H1 (cell line): ENCODE measurements at regions of chr12 and their contacts with region 1.

Region 1: GRCh38 chr12:54214553-54215406 is 26.0 kb upstream of the SMUG1 start:
- DNase-seq: peak; percentile 78 to 96
- H3K4me3 ChIP-seq: no peak overlapping the region
- H3K27ac ChIP-seq: no peak overlapping the region
- H3K4me1 ChIP-seq: peaks cover 0 to 26% (median 17%) of the 10 kb centered on the region in 4 experiments; a peak in 6 of 7 replicates
- H3K27me3 ChIP-seq: peaks cover 1 to 42% (median 27%) of the 10 kb centered on the region in 4 experiments; a peak in 6 of 7 replicates
- CTCF ChIP-seq: peak; percentile 98 to 100 (median 100)
- EP300 ChIP-seq: no peak
- POLR2A ChIP-seq: no peak
- RAD21 ChIP-seq: peak; percentile 54 to 68

Region 2: DNA sequence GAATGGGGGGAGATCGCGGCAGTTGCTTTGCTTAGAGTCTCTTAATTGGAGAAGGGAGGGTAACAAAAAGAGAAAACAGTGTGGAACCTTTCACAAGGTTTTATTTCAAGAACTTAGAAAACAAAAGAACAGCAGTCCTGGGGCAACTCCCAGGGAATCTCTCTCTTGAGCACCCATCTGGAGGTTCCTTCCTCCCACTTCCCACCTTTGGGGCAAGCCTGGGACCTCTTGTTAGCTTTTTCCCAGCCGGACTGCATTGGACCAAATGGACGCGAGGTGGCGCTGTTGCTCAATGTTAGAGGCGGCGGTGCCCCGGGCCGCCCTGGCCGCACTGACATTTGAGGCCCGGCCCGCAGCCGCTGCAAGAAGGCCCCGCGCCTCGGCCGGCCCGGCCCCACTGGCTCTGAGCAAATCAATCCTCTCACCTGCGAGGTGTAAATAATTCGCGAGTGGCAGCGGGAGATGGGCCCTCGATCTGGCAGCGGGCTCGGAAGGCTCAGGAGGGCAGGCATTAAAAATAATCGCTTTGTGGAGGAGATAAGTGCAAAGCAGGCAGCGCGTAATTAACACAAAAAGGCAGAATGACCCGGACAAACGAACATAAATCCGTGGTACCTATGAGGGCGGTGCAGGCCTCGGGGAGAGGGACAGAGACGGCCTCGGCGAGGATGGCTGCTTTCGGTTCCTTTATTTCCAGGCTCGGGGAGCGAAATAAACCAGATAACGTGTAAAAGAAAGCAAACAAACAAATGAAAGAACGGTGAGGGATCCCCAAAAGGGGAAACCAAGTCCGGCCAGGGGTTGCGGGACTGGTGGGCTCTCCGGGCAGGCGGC is 208.7 kb before region 1 on chr12:
- CTCF ChIA-PET with region 1: interaction called, 154 read pairs
- POLR2A ChIA-PET with region 1: no interaction called
- DNase-seq: peak; percentile 50 to 98
- H3K4me3 ChIP-seq: no peak overlapping the region
- H3K27ac ChIP-seq: no peak overlapping the region
- H3K4me1 ChIP-seq: peaks cover 0 to 4% (median 0%) of the 10 kb centered on the region in 4 experiments; a peak in 2 of 7 replicates
- H3K27me3 ChIP-seq: peaks cover 97 to 100% (median 100%) of the 10 kb centered on the region in 4 experiments
- CTCF ChIP-seq: peak; percentile 88 to 97 (median 89)
- EP300 ChIP-seq: no peak
- POLR2A ChIP-seq: no peak
- RAD21 ChIP-seq: peak; percentile 98

Region 3: DNA sequence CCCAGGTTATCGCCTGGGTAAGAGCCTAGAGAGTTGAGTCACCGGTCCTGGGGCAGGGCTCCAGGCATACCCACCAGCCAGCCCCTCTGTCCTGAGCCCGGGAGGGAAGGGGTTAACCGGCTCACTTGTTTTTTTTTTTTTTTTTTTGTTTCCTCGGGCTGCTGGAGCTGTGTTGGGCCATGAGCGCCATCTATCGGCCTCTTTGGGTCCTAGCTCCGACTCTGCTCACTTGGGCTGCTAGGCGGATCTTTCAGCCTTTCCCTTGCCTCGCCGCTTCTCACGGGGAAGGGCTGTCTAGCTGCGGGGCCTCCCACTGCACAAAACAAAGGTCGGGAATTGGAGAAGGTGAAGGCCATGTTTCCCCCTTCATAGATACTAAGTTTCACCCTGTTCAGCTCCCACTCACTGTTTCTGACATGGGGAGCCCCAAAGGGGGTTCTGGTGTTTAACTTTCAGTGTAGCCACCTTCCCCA is 23.2 kb before region 1 on chr12:
- CTCF ChIA-PET with region 1: interaction called, 178 read pairs
- POLR2A ChIA-PET with region 1: no interaction called
- DNase-seq: peak; percentile 62 to 85
- H3K4me3 ChIP-seq: no peak overlapping the region
- H3K27ac ChIP-seq: no peak overlapping the region
- H3K4me1 ChIP-seq: no peaks in the 10 kb centered on the region; a peak in 2 of 7 replicates
- H3K27me3 ChIP-seq: peaks cover 6 to 50% (median 30%) of the 10 kb centered on the region in 4 experiments
- CTCF ChIP-seq: peak; percentile 73 to 93 (median 86)
- EP300 ChIP-seq: no peak
- POLR2A ChIP-seq: no peak
- RAD21 ChIP-seq: peak; percentile 92 to 96

Region 4: DNA sequence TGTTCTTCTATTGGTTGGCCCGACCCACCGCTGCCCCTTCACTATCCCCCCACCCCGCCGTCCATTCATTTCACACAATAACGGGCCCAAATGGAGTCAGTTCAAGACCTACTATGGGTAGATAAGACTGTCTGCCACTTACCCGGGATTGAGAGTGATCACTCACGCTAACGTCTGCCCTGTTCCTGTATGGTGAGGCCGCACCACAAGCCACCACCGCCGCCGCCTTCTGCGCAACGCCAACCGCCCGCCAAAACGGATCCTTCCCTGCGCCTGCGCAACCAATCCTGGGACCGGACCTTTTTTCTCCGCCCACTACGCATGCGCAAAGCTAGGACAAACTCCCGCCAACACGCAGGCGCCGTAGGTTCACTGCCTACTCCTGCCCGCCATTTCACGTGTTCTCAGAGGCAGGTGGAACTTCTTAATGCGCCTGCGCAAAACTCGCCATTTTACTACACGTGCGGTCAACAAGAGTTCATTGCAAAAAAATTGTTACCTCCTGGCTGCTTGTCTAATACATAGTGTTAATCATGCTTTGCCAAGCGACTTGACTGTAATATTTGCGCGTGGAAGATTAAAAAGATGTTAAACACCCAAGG is 65.2 kb after region 1 on chr12 and contains the start of gene CBX5:
- CTCF ChIA-PET with region 1: no interaction called
- POLR2A ChIA-PET with region 1: interaction called, 52 read pairs
- DNase-seq: peak; percentile 96 to 98
- H3K4me3 ChIP-seq: peak within 1 kb of the TSS; percentile 83 to 99 (median 96)
- H3K27ac ChIP-seq: peak within 1 kb of the TSS; percentile 99
- H3K4me1 ChIP-seq: peaks cover 0 to 12% (median 8%) of the 10 kb centered on the region in 4 experiments; a peak in 5 of 7 replicates
- H3K27me3 ChIP-seq: no peaks in the 10 kb centered on the region
- CTCF ChIP-seq: no peak
- EP300 ChIP-seq: 0 out of 3 replicates have a peak, but pooled peaks of 1 of the 2 experiments have one; percentile 26
- POLR2A ChIP-seq: peak; percentile 50 to 67; a peak in 2 of 3 replicates
- RAD21 ChIP-seq: no peak; a peak in 1 of 4 replicates
- total RNA-seq, gene CBX5: 217 and 231 TPM in 2 replicates

Region 5: DNA sequence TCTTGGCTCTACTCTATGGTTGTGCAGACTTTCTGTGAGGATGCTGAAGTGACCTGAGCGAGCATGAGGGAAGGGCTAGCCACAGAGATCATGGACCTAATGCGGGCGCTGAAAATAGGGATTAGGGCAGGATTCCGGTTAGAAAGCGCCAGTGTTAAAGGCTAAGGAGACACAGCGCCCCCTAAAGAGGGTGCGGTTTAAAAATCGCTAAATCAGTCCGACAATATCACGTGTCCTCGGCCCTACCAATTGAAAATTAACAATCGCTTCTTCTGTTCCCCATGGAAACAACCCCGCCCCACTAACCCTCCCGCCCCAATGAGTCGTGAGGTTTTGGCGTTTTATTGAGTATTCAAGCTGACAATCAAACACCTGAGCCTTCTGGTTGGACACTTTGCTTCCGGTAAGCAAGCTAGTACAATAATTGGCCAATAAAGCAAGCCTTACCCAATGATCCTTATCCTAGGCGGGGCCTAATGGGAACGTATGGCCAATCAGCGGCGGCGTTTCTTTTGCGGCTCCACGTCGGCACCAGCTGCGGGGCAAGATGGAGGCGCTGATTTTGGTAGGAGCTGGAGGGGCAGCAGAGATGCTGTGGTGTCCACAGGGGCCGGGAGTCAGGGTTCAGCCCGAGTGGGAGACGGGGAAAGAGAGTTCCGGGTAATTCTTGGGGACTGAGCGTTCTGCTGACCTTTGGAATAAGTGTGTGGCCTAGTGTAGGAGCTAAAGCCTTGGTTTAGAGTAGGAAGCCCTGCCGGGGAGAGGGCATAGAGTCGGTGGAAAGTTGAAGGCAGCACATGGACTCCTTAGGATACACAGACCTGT is 110.0 kb after region 1 on chr12 and contains the start of gene COPZ1:
- CTCF ChIA-PET with region 1: interaction called, 13 read pairs
- POLR2A ChIA-PET with region 1: no interaction called
- DNase-seq: peak; percentile 87 to 97
- H3K4me3 ChIP-seq: peak within 1 kb of the TSS; percentile 79 to 97 (median 88)
- H3K27ac ChIP-seq: peak within 1 kb of the TSS; percentile 83
- H3K4me1 ChIP-seq: peaks cover 0 to 10% (median 4%) of the 10 kb centered on the region in 4 experiments; a peak in 2 of 7 replicates
- H3K27me3 ChIP-seq: no peaks in the 10 kb centered on the region
- CTCF ChIP-seq: peak; percentile 57 to 89 (median 81)
- EP300 ChIP-seq: no peak
- POLR2A ChIP-seq: peak; percentile 54 to 87
- RAD21 ChIP-seq: peak; percentile 80 to 82
- total RNA-seq, gene COPZ1: 94.2 and 103 TPM in 2 replicates

Region 6: GRCh38 chr12:54359033-54359761 is 144.4 kb after region 1 on chr12:
- CTCF ChIA-PET with region 1: interaction called, 21 read pairs
- POLR2A ChIA-PET with region 1: interaction called, 8 read pairs
- DNase-seq: peak; percentile 89 to 98
- H3K4me3 ChIP-seq: peak overlapping the region; percentile 57 to 78 (median 74)
- H3K27ac ChIP-seq: peak overlapping the region; percentile 35; the same call in 1 of the 2 replicates
- H3K4me1 ChIP-seq: peaks cover 16 to 38% (median 20%) of the 10 kb centered on the region in 4 experiments
- H3K27me3 ChIP-seq: no peaks in the 10 kb centered on the region; a peak in 1 of 7 replicates
- CTCF ChIP-seq: no peak
- EP300 ChIP-seq: no peak; a peak in 1 of 3 replicates
- POLR2A ChIP-seq: 0 out of 3 replicates have a peak, but pooled peaks of 1 of the 2 experiments have one; percentile 8
- RAD21 ChIP-seq: no peak

Region 7: DNA sequence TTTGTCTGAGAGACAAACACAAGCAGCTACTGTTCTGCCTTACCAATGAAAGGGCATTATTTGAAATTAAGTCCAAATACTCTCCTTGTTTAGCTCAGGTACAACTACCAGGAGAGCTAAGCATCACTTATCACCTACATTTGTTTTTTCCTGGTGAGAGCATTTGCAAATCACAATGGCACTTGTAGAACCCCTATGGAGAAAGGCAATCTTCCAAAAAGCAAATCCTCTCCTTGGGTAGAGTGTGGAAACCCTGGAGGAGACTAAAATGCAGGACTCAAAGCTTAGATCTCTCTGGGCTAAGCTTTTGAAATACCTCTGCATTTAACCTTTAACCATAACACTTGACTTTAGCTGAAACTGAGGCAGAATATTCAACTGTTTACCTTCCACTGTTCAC is 237.8 kb after region 1 on chr12:
- CTCF ChIA-PET with region 1: no interaction called
- POLR2A ChIA-PET with region 1: no interaction called
- DNase-seq: no peak
- H3K4me3 ChIP-seq: no peak overlapping the region
- H3K27ac ChIP-seq: no peak overlapping the region
- H3K4me1 ChIP-seq: no peaks in the 10 kb centered on the region
- H3K27me3 ChIP-seq: peaks cover 60 to 98% (median 79%) of the 10 kb centered on the region in 4 experiments
- CTCF ChIP-seq: no peak
- EP300 ChIP-seq: no peak
- POLR2A ChIP-seq: no peak
- RAD21 ChIP-seq: no peak

Region 8: GRCh38 chr12:54560374-54560858 is 345.6 kb after region 1 on chr12:
- CTCF ChIA-PET with region 1: no interaction called
- POLR2A ChIA-PET with region 1: no interaction called
- DNase-seq: peak; percentile 61 to 88
- H3K4me3 ChIP-seq: peak overlapping the region; percentile 19 to 57 (median 26); a peak in 7 of 8 replicates
- H3K27ac ChIP-seq: no peak overlapping the region
- H3K4me1 ChIP-seq: peaks cover 0 to 7% (median 5%) of the 10 kb centered on the region in 4 experiments; a peak in 5 of 7 replicates
- H3K27me3 ChIP-seq: peaks cover 19 to 69% (median 54%) of the 10 kb centered on the region in 4 experiments
- CTCF ChIP-seq: no peak
- EP300 ChIP-seq: no peak
- POLR2A ChIP-seq: 0 out of 3 replicates have a peak, but pooled peaks of 1 of the 2 experiments have one; percentile 12
- RAD21 ChIP-seq: no peak

Region 9: GRCh38 chr12:54588110-54588889 is 373.5 kb after region 1 on chr12 and contains the start of gene PPP1R1A:
- CTCF ChIA-PET with region 1: no interaction called
- POLR2A ChIA-PET with region 1: no interaction called
- DNase-seq: peak in 1 of 2 experiments; percentile 73
- H3K4me3 ChIP-seq: peak within 1 kb of the TSS; percentile 69 to 88 (median 74)
- H3K27ac ChIP-seq: no peak within 1 kb of the TSS
- H3K4me1 ChIP-seq: peaks cover 0 to 26% (median 18%) of the 10 kb centered on the region in 4 experiments; a peak in 6 of 7 replicates
- H3K27me3 ChIP-seq: peaks cover 2 to 53% (median 41%) of the 10 kb centered on the region in 4 experiments
- CTCF ChIP-seq: no peak
- EP300 ChIP-seq: no peak
- POLR2A ChIP-seq: no peak
- RAD21 ChIP-seq: no peak
- total RNA-seq, gene PPP1R1A: 8.1 and 13.1 TPM in 2 replicates